ENCODE measurements at regions of chr11 and their contacts with region 1.

Region 1: DNA sequence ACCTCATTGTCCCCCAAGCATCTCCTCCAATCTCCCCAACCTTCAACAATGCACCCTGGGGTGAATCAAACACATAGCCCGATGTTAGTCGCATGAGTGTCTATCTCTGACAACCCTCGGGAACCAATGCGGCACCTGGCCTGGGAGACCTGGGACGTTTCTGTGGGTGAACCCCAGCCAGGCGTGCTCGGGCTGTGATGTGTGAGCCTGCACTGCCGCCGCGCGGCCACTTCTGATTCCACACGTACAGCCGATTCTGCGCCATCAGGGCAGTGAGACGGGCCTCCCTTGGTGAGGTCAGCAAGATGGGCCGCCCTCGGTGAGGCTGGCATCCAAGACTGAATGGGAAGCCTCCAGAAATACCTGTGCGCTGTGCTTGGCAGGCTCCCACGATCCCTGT is 5.2 kb upstream of the H19 start:
- DNase-seq: no peak
- H3K4me3 Mint-ChIP-seq: no peak overlapping the region
- H3K27ac Mint-ChIP-seq: no peak overlapping the region
- H3K4me1 Mint-ChIP-seq: no peaks in the 10 kb centered on the region
- H3K27me3 Mint-ChIP-seq: no peaks in the 10 kb centered on the region
- CTCF ChIP-seq: no peak

Region 2: DNA sequence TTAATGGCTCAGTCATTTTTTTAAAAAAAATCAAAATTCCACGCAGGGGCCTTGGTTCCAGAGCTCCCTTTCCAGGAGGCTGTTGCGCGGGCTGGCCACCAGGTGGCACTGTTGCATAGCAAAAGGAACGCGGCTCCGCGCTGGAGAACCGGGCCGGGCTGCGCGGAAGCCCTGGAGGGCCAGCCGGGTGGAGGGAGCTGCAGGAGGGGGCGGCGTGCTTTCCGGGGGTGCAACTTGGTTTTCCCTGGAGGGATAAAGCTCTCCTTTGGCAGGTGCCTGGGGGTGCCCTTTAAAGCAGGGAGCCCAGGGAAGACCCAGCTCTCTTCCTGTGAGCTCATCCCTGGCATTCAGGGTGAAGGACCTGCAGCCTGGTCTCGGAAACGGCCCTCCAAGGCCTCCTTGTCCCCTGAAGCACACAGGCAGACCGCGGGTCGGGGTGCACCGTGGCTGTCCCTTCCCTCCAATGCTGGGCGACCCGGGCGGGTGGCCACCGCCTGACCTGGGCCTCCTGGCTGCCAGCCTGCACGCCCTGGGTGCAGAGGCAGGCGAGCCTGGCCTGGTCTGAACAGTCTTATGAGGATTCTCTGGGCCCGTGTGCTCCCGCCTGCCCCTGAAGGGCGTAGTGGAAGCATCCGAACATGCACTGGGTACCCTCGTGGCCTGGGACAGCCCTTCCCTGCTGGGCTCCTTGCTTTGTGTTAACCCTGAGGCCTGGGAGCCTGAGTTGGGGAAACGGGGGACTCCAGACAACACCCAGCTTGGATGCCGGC is 349.9 kb before region 1 on chr11:
- CTCF ChIA-PET with region 1: interaction called, 28 read pairs
- intact Hi-C with region 1: no loop called
- DNase-seq: peak; percentile 83
- H3K4me3 Mint-ChIP-seq: no peak overlapping the region
- H3K27ac Mint-ChIP-seq: no peak overlapping the region
- H3K4me1 Mint-ChIP-seq: no peaks in the 10 kb centered on the region
- H3K27me3 Mint-ChIP-seq: peaks cover 75% of the 10 kb centered on the region
- CTCF ChIP-seq: peak; percentile 98

Region 3: DNA sequence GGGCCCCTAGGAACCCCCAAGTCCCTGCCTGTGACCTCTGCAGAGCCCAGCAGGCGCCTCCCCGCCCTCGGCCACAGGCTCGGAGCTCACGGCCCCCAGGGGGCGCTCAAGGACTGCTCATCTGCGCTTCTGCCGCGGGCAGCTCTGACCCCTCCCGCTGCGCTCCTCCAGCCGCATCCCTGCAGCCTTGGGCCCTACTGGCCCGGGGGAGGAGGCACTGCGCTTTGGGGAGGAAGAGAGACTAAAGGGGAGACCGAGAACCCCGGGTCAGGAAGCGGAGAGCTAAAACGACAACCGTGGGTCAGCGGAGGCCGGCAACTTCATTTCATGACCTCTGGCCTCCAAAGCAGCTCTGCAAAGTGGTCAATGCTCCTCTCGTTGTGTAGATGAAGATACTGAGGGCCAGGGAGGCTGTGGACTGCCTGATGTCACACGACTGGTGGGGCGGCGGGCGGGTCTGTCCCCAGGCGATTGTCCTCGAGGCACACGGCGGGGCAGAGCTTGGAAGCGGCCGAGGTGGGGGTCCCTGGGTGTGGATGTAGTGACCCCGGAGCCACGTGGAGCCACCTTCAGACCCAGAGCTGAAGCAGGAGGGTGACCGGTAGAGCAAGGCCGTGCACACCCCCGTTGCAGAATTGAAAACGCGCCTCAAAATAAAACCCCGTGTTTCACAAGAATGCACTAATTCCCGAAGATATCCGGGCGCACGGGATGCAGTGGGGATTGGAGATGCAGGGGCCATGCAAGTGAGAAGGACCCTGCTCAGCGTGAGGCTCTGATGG is 308.6 kb before region 1 on chr11:
- CTCF ChIA-PET with region 1: interaction called, 22 read pairs
- intact Hi-C with region 1: no loop called
- DNase-seq: peak; percentile 94
- H3K4me3 Mint-ChIP-seq: peak overlapping the region; percentile 68
- H3K27ac Mint-ChIP-seq: no peak overlapping the region
- H3K4me1 Mint-ChIP-seq: peaks cover 16% of the 10 kb centered on the region
- H3K27me3 Mint-ChIP-seq: peaks cover 36% of the 10 kb centered on the region
- CTCF ChIP-seq: peak; percentile 92

Region 4: DNA sequence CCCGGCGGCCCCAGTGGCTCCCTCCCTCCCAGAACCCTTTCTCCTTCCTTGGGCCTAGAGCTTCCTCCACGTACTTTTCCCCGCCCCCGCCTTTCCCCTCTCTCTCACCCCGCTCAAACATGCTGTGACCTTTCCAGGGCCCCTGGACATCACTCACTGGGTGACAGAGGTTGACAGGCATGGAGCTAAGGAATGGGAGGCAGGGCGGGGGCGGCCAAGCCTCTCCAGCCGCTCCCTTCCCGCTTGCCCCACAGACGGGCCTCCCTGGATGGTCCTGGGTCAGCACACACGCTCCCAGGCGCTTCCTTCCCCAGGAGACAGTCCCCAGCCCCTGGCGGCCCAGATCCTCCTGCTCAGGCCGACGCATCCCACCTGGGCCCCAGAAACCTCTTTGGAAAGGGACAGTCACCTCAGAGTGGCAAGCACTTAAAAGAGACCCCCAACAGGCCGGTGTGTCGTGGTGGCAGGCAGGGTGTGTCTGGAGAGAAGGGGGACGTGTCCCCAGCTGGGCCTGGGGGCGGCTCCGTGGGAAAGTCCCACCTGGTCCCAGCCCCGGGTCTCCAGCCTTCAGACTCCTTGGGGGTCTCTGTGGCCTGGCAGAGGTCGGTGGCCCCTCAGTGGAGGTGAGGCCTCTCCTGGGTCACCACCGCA is 14.0 kb before region 1 on chr11:
- CTCF ChIA-PET with region 1: no interaction called
- intact Hi-C with region 1: no loop called
- DNase-seq: no peak
- H3K4me3 Mint-ChIP-seq: no peak overlapping the region
- H3K27ac Mint-ChIP-seq: no peak overlapping the region
- H3K4me1 Mint-ChIP-seq: no peaks in the 10 kb centered on the region
- H3K27me3 Mint-ChIP-seq: no peaks in the 10 kb centered on the region
- CTCF ChIP-seq: no peak